ENCODE measurements at regions of chr3 and their contacts with region 1.

Region 1: GRCh38 chr3:15205934-15206661 is at the start of gene CAPN7:
- DNase-seq: peak; percentile 84 to 99 (median 94)
- ATAC-seq: peak; percentile 89
- H3K4me3 ChIP-seq: peak within 1 kb of the TSS; percentile 84
- H3K4me3 Mint-ChIP-seq: peak within 1 kb of the TSS; percentile 92
- H3K27ac ChIP-seq: peak within 1 kb of the TSS; percentile 69 to 86
- H3K27ac Mint-ChIP-seq: peak within 1 kb of the TSS; percentile 93
- H3K4me1 ChIP-seq: peaks cover 21% of the 10 kb centered on the region
- H3K4me1 Mint-ChIP-seq: peaks cover 43% of the 10 kb centered on the region
- H3K27me3 ChIP-seq: no peaks in the 10 kb centered on the region
- H3K27me3 Mint-ChIP-seq: no peaks in the 10 kb centered on the region
- CTCF ChIP-seq: no peak
- total RNA-seq, gene CAPN7: 64.7 to 69.4 TPM

Region 2: DNA sequence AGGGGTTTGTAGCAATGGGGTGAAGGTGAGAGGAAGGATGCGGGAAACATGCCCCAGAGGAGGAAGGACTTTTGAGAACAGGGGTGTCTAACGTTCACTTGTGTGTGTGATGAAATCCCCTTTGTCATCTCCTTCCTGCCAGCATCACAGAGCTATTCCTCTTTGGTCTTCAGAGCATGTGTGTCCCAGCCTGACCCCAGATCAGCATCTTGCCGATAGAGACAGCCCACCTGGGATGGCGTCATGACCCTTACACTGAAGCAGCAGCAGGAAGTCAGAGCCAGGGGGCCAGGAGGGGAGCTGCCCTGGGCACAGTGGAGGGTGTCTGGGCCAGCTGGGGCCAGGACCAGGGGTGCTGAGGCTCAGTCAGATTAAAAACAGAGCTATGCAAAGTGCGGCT is 636.0 kb before region 1 on chr3:
- CTCF ChIA-PET with region 1: no interaction called
- POLR2A ChIA-PET with region 1: no interaction called
- intact Hi-C with region 1: no loop called
- DNase-seq: no peak
- ATAC-seq: no peak
- H3K4me3 ChIP-seq: no peak overlapping the region
- H3K4me3 Mint-ChIP-seq: no peak overlapping the region
- H3K27ac ChIP-seq: no peak overlapping the region
- H3K27ac Mint-ChIP-seq: no peak overlapping the region
- H3K4me1 ChIP-seq: no peaks in the 10 kb centered on the region
- H3K4me1 Mint-ChIP-seq: no peaks in the 10 kb centered on the region
- H3K27me3 ChIP-seq: no peaks in the 10 kb centered on the region
- H3K27me3 Mint-ChIP-seq: peaks cover 10% of the 10 kb centered on the region
- CTCF ChIP-seq: no peak

Region 3: DNA sequence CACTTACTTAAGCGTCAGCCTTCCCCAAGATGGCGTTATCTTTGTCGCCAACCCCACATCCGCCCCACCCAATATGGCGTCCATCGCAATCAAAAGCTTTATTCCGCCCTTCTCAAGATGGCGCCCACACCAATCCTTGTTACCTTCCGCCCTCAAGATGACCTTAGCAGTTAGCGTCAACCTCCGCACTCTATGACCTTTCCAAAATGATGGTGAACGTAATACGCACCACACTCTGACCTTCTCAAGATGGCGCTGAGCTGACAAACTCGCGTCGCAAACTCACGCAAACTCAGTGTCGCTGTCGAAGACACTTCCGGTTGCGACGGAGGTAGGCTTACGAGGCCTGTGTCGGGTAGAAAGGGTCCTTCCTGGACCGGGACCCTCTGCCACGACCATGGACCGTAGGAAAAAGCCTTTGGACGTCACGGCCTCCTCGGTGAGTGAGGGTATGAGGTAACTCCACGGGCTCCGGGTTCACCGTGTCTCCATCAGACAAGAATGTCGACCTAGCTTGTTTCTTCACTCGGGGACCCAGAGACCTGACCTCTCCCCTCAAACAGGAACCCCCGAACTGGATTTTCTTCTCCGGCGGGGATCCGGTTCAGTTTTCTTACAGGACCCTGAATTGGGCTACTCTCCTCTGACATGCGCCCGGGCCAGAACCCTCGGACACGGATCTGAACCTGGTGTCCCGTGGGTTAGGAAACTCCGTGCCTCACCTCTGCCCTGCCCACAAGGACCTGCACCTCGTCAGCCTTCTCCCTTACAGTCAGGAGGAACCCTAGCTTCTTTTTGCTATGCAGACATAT is 554.5 kb before region 1 on chr3 and contains the start of gene CCDC174:
- CTCF ChIA-PET with region 1: no interaction called
- POLR2A ChIA-PET with region 1: interaction called, 6 read pairs
- intact Hi-C with region 1: loop called in 1 of 2 experiments (anchors 5 kb)
- DNase-seq: peak; percentile 90 to 100 (median 94)
- ATAC-seq: peak; percentile 97
- H3K4me3 ChIP-seq: peak within 1 kb of the TSS; percentile 75
- H3K4me3 Mint-ChIP-seq: peak within 1 kb of the TSS; percentile 87
- H3K27ac ChIP-seq: peak within 1 kb of the TSS; percentile 76 to 97
- H3K27ac Mint-ChIP-seq: peak within 1 kb of the TSS; percentile 85
- H3K4me1 ChIP-seq: peaks cover 29% of the 10 kb centered on the region
- H3K4me1 Mint-ChIP-seq: peaks cover 61% of the 10 kb centered on the region
- H3K27me3 ChIP-seq: no peaks in the 10 kb centered on the region
- H3K27me3 Mint-ChIP-seq: no peaks in the 10 kb centered on the region
- CTCF ChIP-seq: no peak
- total RNA-seq, gene CCDC174: 32.9 to 37.5 TPM

Region 4: GRCh38 chr3:14774431-14774830 is 431.7 kb before region 1 on chr3:
- CTCF ChIA-PET with region 1: no interaction called
- POLR2A ChIA-PET with region 1: no interaction called
- intact Hi-C with region 1: no loop called
- DNase-seq: no peak
- ATAC-seq: no peak
- H3K4me3 ChIP-seq: no peak overlapping the region
- H3K4me3 Mint-ChIP-seq: no peak overlapping the region
- H3K27ac ChIP-seq: no peak overlapping the region
- H3K27ac Mint-ChIP-seq: no peak overlapping the region
- H3K4me1 ChIP-seq: no peaks in the 10 kb centered on the region
- H3K4me1 Mint-ChIP-seq: no peaks in the 10 kb centered on the region
- H3K27me3 ChIP-seq: peaks cover 0 to 3% of the 10 kb centered on the region in 2 experiments
- H3K27me3 Mint-ChIP-seq: no peaks in the 10 kb centered on the region
- CTCF ChIP-seq: no peak

Region 5: DNA sequence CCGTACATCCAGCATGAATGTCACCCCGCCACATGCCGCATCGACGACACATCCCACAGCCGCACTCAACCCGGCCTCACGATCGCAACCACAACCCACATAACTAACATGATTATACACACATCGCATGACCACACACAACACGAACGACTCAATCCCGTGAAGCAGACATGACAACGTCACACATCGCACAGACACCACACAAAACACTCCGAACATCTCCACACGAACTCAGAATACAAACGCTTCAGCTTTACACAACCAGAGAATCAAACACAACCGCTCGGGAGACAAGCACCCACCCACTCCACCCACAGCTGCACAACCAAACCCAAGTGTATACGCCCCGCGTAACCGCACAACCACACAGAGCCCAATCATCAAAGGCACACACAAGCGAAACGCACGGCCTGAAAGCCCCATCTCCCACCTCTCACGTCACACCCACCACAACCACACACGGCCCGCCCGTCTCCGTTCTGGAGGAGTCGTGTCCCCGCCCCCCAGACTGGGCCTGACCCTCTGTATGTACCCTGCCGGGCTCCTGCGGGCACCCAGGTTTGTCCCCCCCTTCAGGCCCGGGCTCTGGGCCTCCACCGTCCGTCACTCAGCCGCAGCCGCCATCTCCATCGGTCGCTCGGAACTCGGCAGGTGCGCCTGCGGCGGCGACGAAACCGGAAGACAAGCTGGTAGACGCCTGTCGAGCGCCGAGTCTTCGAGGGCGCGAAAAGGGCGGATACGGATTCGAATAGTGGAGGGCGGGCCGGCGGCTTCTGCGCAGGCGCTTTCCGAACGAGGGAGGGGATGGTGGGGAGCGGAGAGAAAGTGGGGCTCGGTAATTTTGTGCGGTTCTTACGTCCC is 107.4 kb before region 1 on chr3 and contains the start of gene RBSN:
- CTCF ChIA-PET with region 1: no interaction called
- POLR2A ChIA-PET with region 1: interaction called, 16 read pairs
- intact Hi-C with region 1: loop called in 1 of 2 experiments (anchors 5 kb)
- DNase-seq: peak; percentile 90 to 98 (median 94)
- ATAC-seq: peak; percentile 72
- H3K4me3 ChIP-seq: peak within 1 kb of the TSS; percentile 92
- H3K4me3 Mint-ChIP-seq: peak within 1 kb of the TSS; percentile 96
- H3K27ac ChIP-seq: peak within 1 kb of the TSS; percentile 96 to 98
- H3K27ac Mint-ChIP-seq: peak within 1 kb of the TSS; percentile 97
- H3K4me1 ChIP-seq: peaks cover 33% of the 10 kb centered on the region
- H3K4me1 Mint-ChIP-seq: peaks cover 36% of the 10 kb centered on the region
- H3K27me3 ChIP-seq: no peaks in the 10 kb centered on the region
- H3K27me3 Mint-ChIP-seq: peaks cover 5% of the 10 kb centered on the region
- CTCF ChIP-seq: no peak
- total RNA-seq, gene RBSN: 57.2 to 57.9 TPM

Region 6: GRCh38 chr3:15268033-15268631 is 62.0 kb after region 1 on chr3:
- CTCF ChIA-PET with region 1: interaction called, 19 read pairs
- POLR2A ChIA-PET with region 1: interaction called, 10 read pairs
- intact Hi-C with region 1: loop called (anchors 2 to 5 kb)
- DNase-seq: peak; percentile 79 to 93 (median 82)
- ATAC-seq: peak; percentile 39
- H3K4me3 ChIP-seq: no peak overlapping the region
- H3K4me3 Mint-ChIP-seq: peak overlapping the region; percentile 8
- H3K27ac ChIP-seq: no peak overlapping the region
- H3K27ac Mint-ChIP-seq: peak overlapping the region; percentile 75
- H3K4me1 ChIP-seq: peaks cover 83% of the 10 kb centered on the region
- H3K4me1 Mint-ChIP-seq: peaks cover 86% of the 10 kb centered on the region
- H3K27me3 ChIP-seq: no peaks in the 10 kb centered on the region
- H3K27me3 Mint-ChIP-seq: no peaks in the 10 kb centered on the region
- CTCF ChIP-seq: peak; percentile 84

Region 7: GRCh38 chr3:15405448-15406050 is 199.5 kb after region 1 on chr3:
- CTCF ChIA-PET with region 1: interaction called, 31 read pairs
- POLR2A ChIA-PET with region 1: interaction called, 8 read pairs
- intact Hi-C with region 1: loop called (anchors 1 kb)
- DNase-seq: peak in 4 of 14 experiments; percentile 39 to 77 (median 72)
- ATAC-seq: peak; percentile 82
- H3K4me3 ChIP-seq: no peak overlapping the region
- H3K4me3 Mint-ChIP-seq: no peak overlapping the region
- H3K27ac ChIP-seq: no peak overlapping the region
- H3K27ac Mint-ChIP-seq: no peak overlapping the region
- H3K4me1 ChIP-seq: peaks cover 7% of the 10 kb centered on the region
- H3K4me1 Mint-ChIP-seq: peaks cover 1% of the 10 kb centered on the region
- H3K27me3 ChIP-seq: no peaks in the 10 kb centered on the region
- H3K27me3 Mint-ChIP-seq: no peaks in the 10 kb centered on the region
- CTCF ChIP-seq: peak; percentile 63

Region 8: DNA sequence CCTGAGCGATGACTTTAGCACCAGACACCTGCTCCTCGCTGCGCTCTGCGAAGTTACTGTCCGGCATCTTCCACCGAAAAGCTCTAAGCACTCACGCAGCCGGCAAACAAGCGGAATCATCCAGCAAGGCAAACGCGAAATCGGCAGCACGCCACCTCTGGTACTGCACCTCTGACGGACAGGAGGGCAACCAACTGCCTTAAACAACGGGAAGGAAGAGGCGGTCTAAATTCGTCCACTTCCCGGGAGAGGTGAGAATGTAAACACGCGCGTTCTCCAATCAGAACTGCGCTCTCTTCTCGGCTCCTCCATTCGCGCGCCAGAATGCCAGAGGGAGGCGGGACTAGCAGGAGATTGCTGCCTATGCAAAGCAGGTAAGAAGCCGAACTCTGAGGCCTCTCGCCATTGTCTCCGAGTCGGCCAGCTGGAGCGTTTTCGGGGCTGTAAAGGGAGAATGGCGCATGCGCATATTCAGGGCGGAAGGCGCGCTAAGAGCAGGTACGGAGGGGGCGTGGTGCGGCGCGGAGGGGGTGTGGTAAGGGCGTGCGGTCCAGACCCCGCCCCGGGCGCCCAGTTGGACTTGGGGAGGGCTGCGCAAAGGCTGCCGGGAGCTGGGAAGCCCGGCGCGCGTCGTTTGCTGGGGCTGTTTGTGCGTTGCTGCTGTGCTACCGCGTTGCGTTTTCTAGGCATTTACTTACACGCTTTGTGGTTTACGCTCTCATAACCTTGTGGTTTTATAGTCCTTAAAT is 395.5 kb after region 1 on chr3 and contains the starts of genes BTD and HACL1:
- CTCF ChIA-PET with region 1: no interaction called
- POLR2A ChIA-PET with region 1: interaction called, 23 read pairs
- intact Hi-C with region 1: loop called in 1 of 2 experiments (anchors 5 kb)
- DNase-seq: peak; percentile 97 to 100 (median 98)
- ATAC-seq: peak; percentile 90
- H3K4me3 ChIP-seq: peak within 1 kb of the TSS; percentile 83
- H3K4me3 Mint-ChIP-seq: peak within 1 kb of the TSS; percentile 95
- H3K27ac ChIP-seq: peak within 1 kb of the TSS; percentile 75 to 81
- H3K27ac Mint-ChIP-seq: peak within 1 kb of the TSS; percentile 91
- H3K4me1 ChIP-seq: peaks cover 28% of the 10 kb centered on the region
- H3K4me1 Mint-ChIP-seq: peaks cover 65% of the 10 kb centered on the region
- H3K27me3 ChIP-seq: no peaks in the 10 kb centered on the region
- H3K27me3 Mint-ChIP-seq: no peaks in the 10 kb centered on the region
- CTCF ChIP-seq: peak; percentile 21
- total RNA-seq, gene BTD: 11.2 to 12.5 TPM
- total RNA-seq, gene HACL1: 26.6 to 33.2 TPM

Region 9: GRCh38 chr3:15667484-15667883 is 461.4 kb after region 1 on chr3:
- CTCF ChIA-PET with region 1: no interaction called
- POLR2A ChIA-PET with region 1: no interaction called
- intact Hi-C with region 1: no loop called
- DNase-seq: peak in 6 of 14 experiments; percentile 4 to 79 (median 43)
- ATAC-seq: peak; percentile 86
- H3K4me3 ChIP-seq: no peak overlapping the region
- H3K4me3 Mint-ChIP-seq: peak overlapping the region; percentile 22
- H3K27ac ChIP-seq: no peak overlapping the region
- H3K27ac Mint-ChIP-seq: no peak overlapping the region
- H3K4me1 ChIP-seq: peaks cover 4% of the 10 kb centered on the region
- H3K4me1 Mint-ChIP-seq: peaks cover 30% of the 10 kb centered on the region
- H3K27me3 ChIP-seq: no peaks in the 10 kb centered on the region
- H3K27me3 Mint-ChIP-seq: no peaks in the 10 kb centered on the region
- CTCF ChIP-seq: no peak

Region 10: DNA sequence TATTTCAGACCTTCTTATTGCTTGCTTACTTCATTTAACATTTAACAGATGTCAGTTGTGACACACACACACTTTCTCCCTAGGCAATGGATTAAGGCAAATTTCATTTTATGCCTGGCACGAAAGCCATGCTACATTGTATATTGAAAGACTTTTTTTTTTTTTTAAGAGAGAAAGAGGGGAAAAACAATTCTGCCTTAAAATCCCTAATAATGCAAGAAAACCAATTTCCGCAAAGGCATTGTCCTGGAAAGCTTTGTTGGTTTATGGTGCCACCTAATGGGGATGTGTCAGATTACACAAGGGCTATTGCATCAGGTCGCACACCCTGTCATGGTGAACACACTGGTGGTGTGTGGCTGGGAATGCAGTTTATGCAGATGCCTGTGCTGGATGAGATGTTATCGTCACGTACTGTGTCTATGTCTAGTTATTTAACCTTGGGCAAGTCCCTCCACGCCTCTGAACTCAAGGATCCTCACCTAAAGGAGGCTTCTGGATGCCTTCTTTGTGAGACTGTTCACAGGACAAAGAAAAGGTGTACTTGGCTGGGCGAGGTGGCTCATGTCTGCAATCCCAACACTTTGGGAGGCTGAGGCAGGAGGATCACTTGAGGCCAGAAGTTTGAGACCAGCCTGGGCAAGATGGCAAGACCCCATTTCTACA is 1344.7 kb after region 1 on chr3:
- CTCF ChIA-PET with region 1: no interaction called
- POLR2A ChIA-PET with region 1: no interaction called
- intact Hi-C with region 1: loop called in 1 of 2 experiments (anchors 10 kb)
- DNase-seq: peak; percentile 43 to 90 (median 62)
- ATAC-seq: peak; percentile 100
- H3K4me3 ChIP-seq: no peak overlapping the region
- H3K4me3 Mint-ChIP-seq: no peak overlapping the region
- H3K27ac ChIP-seq: no peak overlapping the region
- H3K27ac Mint-ChIP-seq: peak overlapping the region; percentile 16
- H3K4me1 ChIP-seq: peaks cover 5% of the 10 kb centered on the region
- H3K4me1 Mint-ChIP-seq: no peaks in the 10 kb centered on the region
- H3K27me3 ChIP-seq: no peaks in the 10 kb centered on the region
- H3K27me3 Mint-ChIP-seq: peaks cover 4% of the 10 kb centered on the region
- CTCF ChIP-seq: peak; percentile 91